ENCODE measurements at regions of chr20 and their contacts with region 1.

Region 1: GRCh38 chr20:40970201-40970600 is 58.4 kb upstream of the TOP1 start:
- DNase-seq: no peak
- ATAC-seq: no peak
- H3K4me3 ChIP-seq: no peak overlapping the region
- H3K27ac ChIP-seq: no peak overlapping the region
- H3K4me1 ChIP-seq: peaks cover 0 to 10% (median 0%) of the 10 kb centered on the region in 9 donors
- H3K27me3 ChIP-seq: peaks cover 0 to 23% (median 0%) of the 10 kb centered on the region in 7 donors
- CTCF ChIP-seq: no peak

Region 2: DNA sequence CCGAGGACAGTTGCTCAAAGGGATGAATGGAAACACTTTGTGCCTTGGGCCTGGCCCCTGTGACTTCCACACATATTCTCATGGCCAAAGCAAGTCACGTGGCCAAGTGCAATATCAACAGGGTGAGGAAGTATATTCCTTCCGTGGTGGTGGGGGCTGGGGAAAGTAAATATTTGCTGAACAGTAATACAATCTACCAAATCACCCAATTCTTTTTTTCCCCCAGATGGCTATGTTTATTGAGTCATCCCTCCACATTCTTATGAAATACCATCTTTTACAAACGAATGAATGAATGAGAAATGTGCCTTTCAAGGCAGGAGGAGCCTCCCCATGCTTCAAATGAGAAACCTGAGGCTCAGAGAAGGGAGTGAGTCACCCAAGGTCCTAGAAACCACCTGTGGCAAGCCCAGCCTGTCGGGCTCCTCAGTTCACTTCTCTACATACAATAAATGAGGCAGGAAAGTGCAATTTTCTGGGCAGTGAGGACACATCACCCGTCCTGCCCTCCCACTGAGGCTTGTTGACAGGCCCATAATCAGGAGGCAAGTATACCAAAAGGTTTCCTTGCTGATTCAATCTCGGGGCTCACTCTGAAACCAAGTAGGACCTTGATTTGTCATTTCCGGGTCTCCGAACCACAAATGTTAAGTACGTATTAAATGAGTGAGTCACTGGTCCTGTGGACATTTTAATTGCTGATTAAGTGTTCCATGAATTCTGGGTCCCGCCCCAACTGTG is 33.1 kb after region 1 on chr20:
- intact Hi-C with region 1: no loop called
- DNase-seq: peak; percentile 11 to 38
- ATAC-seq: peak in 7 of 8 donors; percentile 22 to 77 (median 54)
- H3K4me3 ChIP-seq: peak overlapping the region in 1 of 10 donors; percentile 16
- H3K27ac ChIP-seq: peak overlapping the region in 8 of 10 donors; percentile 21 to 86 (median 41)
- H3K4me1 ChIP-seq: peaks cover 3 to 69% (median 39%) of the 10 kb centered on the region in 9 donors
- H3K27me3 ChIP-seq: no peaks in the 10 kb centered on the region
- CTCF ChIP-seq: no peak

Region 3: DNA sequence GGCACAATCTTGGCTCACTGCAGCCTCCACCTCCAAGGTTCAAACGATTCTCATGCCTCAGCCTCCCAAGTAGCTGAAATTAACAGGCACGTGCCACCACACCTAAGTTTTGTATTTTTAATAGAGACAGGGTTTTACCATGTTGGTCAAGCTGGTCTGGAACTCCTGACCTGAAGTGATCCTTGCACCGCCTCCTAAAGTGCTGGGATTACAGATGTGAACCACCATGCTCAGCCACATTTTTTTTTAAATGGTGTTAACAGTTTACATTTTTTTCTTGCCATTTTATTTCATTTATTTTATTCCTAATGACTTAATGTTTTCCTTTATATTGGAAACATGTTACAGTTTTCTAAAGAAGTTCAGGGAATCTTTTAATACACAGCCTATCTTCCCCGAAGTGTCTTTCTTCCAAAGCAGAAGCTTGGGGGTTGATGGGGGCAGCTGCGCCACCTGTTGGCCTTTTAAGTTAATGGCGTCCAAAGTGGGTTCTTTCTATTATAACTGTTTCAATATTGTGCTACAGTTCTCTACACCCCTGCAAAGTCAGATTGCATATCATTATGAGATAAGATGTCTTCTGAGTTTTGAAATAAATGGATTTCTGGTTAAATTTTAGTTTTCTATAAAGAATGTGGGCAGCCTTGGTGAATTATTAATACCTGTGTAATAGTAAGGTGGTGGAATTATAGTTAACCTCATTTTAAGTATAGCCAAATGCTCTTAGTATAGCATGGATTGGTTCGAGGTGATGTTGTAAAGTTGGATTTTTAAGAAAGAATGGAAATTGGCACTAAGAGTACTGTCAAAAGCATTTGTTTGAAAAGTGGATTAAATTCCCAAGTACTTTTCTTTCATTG is 125.1 kb after region 1 on chr20:
- intact Hi-C with region 1: loop called (anchors 1 to 5 kb)
- DNase-seq: peak; percentile 40 to 54
- ATAC-seq: peak in 7 of 8 donors; percentile 58 to 83 (median 70)
- H3K4me3 ChIP-seq: no peak overlapping the region
- H3K27ac ChIP-seq: no peak overlapping the region
- H3K4me1 ChIP-seq: peaks cover 0 to 15% (median 0%) of the 10 kb centered on the region in 9 donors
- H3K27me3 ChIP-seq: no peaks in the 10 kb centered on the region
- CTCF ChIP-seq: peak; percentile 69 to 92 (median 87)